ENCODE measurements at regions of chr22 and their contacts with region 1.

Region 1: GRCh38 chr22:29633514-29634312 is 30.3 kb downstream of the NF2 start:
- DNase-seq: no peak

Region 2: DNA sequence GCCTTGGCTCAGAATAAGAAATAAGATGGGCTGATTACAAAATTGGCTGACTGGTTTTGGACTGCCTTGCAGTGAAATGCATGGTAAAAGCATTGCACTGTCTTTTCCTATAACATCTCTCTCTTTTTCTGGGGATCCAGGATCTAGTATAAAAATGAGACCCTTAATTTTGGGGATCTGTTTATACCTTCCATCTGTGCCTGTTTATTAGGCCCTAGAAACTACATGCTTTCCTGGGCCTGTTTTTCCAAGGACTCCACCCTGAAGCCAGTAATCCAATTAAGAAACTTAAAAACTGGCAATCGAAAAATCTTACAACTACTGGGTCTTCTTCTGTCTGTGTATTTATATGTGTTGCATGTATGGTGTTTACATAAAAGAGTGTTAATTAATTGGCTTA is 461.1 kb after region 1 on chr22:
- intact Hi-C with region 1: loop called (anchors 5 kb)
- DNase-seq: no peak